MCF 10A (cell line): ENCODE measurements at regions of chr2 and their contacts with region 1.

Region 1: DNA sequence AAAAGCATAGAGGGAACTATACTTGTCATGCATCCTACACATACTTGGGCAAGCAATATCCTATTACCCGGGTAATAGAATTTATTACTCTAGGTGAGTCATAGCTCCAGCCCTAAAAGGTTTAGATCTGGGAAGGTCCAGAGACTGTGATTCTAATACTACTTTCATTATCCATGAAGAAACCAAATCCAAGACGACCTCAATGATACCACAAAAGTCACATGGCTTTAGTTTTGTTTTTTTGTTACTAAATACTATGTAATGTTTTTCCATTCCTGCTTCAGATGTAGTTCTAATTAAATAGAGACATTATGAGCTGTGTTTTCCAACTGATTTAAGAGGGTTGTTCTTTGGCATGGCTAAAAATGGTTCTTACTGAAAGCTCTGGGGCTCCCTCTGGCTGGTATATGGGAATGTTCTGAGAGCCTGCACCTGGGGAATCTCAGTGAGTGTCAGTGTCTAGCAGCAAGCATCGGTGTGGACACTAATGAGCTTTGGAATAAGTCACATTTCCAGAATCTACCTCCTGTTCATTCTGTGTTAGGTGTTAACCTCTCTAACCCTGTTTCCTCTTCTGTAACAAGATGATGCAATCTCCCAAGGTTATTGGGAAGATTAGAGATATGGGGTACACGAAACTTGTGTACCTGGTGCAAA is 20.5 kb upstream of the IL1RL2 start:
- DNase-seq: peak; percentile 68
- H3K4me3 Mint-ChIP-seq: no peak overlapping the region
- H3K27ac Mint-ChIP-seq: no peak overlapping the region
- H3K4me1 Mint-ChIP-seq: peaks cover 9% of the 10 kb centered on the region
- H3K27me3 Mint-ChIP-seq: no peaks in the 10 kb centered on the region
- CTCF ChIP-seq: peak; percentile 56

Region 2: GRCh38 chr2:101983928-101984327 is 182.4 kb before region 1 on chr2:
- CTCF ChIA-PET with region 1: interaction called, 10 read pairs
- POLR2A ChIA-PET with region 1: no interaction called
- intact Hi-C with region 1: no loop called
- DNase-seq: peak; percentile 60
- H3K4me3 Mint-ChIP-seq: no peak overlapping the region
- H3K27ac Mint-ChIP-seq: no peak overlapping the region
- H3K4me1 Mint-ChIP-seq: peaks cover 42% of the 10 kb centered on the region
- H3K27me3 Mint-ChIP-seq: no peaks in the 10 kb centered on the region
- CTCF ChIP-seq: peak; percentile 33

Region 3: DNA sequence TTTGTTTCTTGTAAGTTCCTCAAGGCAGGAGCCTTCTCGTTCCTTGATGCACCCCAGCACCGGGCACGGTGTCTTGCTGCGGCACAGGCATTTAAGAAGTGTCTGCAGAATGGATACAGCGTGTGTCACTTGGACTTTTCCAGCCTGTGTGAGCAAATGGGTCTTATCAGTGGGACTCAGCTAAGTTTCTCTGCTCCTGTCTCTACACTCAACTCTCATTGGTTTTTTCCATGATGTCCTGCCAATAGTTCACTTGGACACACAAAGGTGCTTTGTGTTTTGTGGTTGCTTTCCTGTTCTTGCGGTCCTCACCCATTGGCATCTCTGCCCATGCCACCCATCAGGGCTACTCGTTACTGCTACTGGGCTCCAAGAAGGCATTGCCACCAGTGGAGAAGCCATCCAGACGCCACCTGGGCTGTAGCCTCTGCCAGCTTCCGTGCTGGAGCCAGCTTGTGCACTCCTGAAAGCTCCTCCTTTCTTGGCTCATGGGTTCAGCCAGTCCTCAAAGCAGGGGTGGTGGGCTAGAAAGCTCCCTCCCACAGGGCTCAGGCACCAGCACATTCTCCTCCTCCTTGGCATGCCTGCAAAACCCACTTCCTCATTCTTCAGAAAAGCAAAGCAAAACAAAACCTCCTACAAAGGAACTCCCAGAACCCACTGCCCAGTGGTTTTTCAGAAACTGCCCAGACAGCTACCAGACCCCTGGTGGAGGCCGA is 133.1 kb before region 1 on chr2:
- CTCF ChIA-PET with region 1: interaction called, 63 read pairs
- POLR2A ChIA-PET with region 1: interaction called, 4 read pairs
- intact Hi-C with region 1: no loop called
- DNase-seq: peak; percentile 77
- H3K4me3 Mint-ChIP-seq: peak overlapping the region; percentile 54
- H3K27ac Mint-ChIP-seq: peak overlapping the region; percentile 86
- H3K4me1 Mint-ChIP-seq: peaks cover 21% of the 10 kb centered on the region
- H3K27me3 Mint-ChIP-seq: no peaks in the 10 kb centered on the region
- CTCF ChIP-seq: no peak

Region 4: DNA sequence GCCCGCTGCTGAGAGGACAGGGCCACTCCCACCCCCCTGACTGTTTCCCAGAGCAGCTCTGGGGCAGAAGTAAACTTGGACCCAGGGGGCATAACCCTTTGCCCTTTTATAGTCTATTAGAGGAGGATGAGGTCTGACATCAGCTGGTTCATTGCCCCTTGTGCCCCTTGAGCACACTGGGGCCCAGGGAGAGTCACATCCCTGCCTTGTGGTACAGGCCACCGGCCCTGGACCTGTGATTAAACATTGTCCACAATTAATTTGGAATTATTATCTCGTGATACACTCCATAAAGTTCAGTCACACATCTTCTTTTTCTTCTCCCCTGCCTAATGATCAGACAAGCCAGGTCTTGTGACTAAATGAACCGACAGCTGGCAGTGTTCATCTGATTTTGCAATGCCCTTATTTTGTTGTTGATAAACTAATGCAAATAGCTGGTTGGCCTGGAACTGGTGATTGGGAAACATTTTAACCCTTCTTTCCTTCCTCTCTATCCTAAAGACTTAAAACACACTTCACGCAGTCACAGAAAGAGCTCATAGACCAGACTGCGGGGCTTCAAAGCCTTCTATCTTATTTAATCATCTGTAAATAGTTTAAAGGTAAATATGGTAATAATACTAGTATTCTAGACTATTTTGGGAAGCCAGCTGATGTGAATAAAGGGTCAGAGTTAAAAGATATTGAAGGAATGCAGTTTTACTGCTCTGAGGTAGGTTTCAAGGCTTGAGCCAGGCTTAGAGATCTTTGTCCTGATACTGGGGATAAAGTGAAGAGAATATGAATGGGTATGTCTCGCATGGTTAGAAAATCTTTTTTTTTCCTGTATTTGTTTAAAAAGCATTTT is 10.4 kb before region 1 on chr2:
- CTCF ChIA-PET with region 1: interaction called, 47 read pairs
- POLR2A ChIA-PET with region 1: interaction called, 13 read pairs
- intact Hi-C with region 1: no loop called
- DNase-seq: peak; percentile 62
- H3K4me3 Mint-ChIP-seq: no peak overlapping the region
- H3K27ac Mint-ChIP-seq: peak overlapping the region; percentile 94
- H3K4me1 Mint-ChIP-seq: peaks cover 30% of the 10 kb centered on the region
- H3K27me3 Mint-ChIP-seq: no peaks in the 10 kb centered on the region
- CTCF ChIP-seq: no peak

Region 5: GRCh38 chr2:102235491-102235890 is 69.2 kb after region 1 on chr2:
- CTCF ChIA-PET with region 1: interaction called, 54 read pairs
- POLR2A ChIA-PET with region 1: interaction called, 9 read pairs
- intact Hi-C with region 1: loop called (anchors 2 kb)
- DNase-seq: peak; percentile 44
- H3K4me3 Mint-ChIP-seq: no peak overlapping the region
- H3K27ac Mint-ChIP-seq: no peak overlapping the region
- H3K4me1 Mint-ChIP-seq: peaks cover 5% of the 10 kb centered on the region
- H3K27me3 Mint-ChIP-seq: no peaks in the 10 kb centered on the region
- CTCF ChIP-seq: peak; percentile 24